ENCODE measurements at regions of chr17 and their contacts with region 1.

Region 1: GRCh38 chr17:42193969-42194899 is at the start of gene GHDC:
- DNase-seq: peak; percentile 77 to 86
- ATAC-seq: peak; percentile 97 to 98
- H3K4me3 ChIP-seq: peak within 1 kb of the TSS; percentile 71 to 95 (median 79)
- H3K27ac ChIP-seq: peak within 1 kb of the TSS; percentile 80 to 95 (median 89)
- H3K4me1 ChIP-seq: peaks cover 16 to 23% of the 10 kb centered on the region in 2 donors
- H3K27me3 ChIP-seq: no peaks in the 10 kb centered on the region
- CTCF ChIP-seq: peak in 1 of 5 experiments; percentile 17
- POLR2A ChIP-seq: no peak
- total RNA-seq, gene GHDC: 13.8 to 20.0 (median 18.2) TPM

Region 2: DNA sequence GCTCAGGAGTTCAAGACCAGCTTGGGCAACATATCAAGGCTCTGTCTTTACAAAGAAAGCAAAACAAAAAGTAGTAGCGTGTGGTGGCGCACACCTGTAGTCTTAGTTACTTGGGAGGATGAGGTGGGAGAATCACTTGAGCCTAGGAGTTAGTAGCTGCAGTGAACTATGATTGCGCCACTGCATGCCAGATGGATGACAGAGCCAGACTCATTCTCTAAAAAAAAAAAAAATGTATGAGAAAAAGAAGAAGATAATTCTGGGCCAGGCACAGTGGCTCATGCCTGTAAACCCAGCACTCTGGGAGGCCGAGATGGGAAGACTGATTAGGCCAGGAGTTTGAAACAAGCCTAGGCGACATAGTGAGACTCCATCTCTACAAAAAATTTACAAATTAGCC is 53.5 kb after region 1 on chr17:
- in situ Hi-C with region 1: no loop called
- intact Hi-C with region 1: no loop called
- DNase-seq: no peak
- ATAC-seq: no peak
- H3K4me3 ChIP-seq: no peak overlapping the region
- H3K27ac ChIP-seq: peak overlapping the region; percentile 86 to 95 (median 92)
- H3K4me1 ChIP-seq: peaks cover 49 to 69% of the 10 kb centered on the region in 2 donors
- H3K27me3 ChIP-seq: no peaks in the 10 kb centered on the region
- CTCF ChIP-seq: no peak
- POLR2A ChIP-seq: no peak

Region 3: GRCh38 chr17:42287926-42288802 is 93.9 kb after region 1 on chr17 and contains the start of gene STAT5A:
- in situ Hi-C with region 1: no loop called
- intact Hi-C with region 1: loop called (anchors 5 kb)
- DNase-seq: peak; percentile 89 to 91
- ATAC-seq: peak; percentile 91 to 95
- H3K4me3 ChIP-seq: peak within 1 kb of the TSS; percentile 51 to 89 (median 68)
- H3K27ac ChIP-seq: peak within 1 kb of the TSS; percentile 81 to 91 (median 86)
- H3K4me1 ChIP-seq: peaks cover 0 to 15% of the 10 kb centered on the region in 2 donors
- H3K27me3 ChIP-seq: no peaks in the 10 kb centered on the region
- CTCF ChIP-seq: no peak
- POLR2A ChIP-seq: peak; percentile 88 to 91
- total RNA-seq, gene STAT5A: 36.0 to 87.0 (median 60.7) TPM

Region 4: DNA sequence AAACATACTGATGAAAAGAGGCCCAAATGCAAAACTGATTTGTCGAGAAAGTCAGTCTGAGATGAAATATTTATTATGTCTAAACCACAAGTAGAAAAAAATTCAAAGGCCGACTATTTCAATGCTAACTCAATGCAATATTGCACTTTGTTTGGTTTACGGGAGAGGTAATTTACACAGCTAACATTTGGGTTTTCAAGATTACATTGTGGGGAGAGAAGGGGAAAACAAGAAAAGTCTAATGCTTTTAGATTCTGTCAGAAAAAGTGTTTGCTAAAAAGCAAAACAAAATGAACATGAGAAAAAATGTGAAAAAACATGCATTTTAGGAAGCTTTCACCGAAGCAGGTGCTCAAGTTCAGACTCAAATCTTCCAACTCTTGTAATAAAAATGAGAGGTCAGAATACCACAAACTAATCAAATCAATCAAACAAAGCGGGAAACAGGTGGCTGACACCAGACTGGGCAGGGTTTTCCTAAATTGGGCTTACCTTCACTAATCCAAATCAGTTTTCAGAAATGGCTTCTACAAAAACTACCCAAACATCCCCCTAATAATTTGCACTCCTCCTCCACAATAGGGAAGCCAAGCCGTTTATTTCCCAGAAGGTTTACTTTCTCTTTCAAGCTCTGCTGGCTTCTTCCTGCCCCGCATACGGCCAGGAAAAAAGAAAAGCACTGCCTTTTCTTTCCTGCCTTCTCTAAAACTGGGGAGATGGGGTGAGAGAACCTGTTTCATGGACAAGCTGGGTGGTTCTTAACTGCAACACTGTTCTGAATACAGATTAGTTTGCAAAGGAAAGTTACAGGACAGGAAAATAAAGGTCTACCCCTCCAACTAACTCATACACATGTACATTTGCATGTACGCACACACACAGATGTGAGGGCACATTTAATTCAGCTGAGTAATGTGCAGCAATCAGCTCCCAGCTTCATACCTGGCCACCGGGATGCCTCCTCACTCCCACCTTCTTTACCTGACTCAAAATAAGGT is 184.7 kb after region 1 on chr17:
- in situ Hi-C with region 1: no loop called
- intact Hi-C with region 1: no loop called
- DNase-seq: no peak
- ATAC-seq: peak in 1 of 2 donors; percentile 60
- H3K4me3 ChIP-seq: peak overlapping the region; percentile 28 to 57 (median 40)
- H3K27ac ChIP-seq: peak overlapping the region; percentile 77 to 99 (median 82)
- H3K4me1 ChIP-seq: peaks cover 59 to 81% of the 10 kb centered on the region in 2 donors
- H3K27me3 ChIP-seq: no peaks in the 10 kb centered on the region
- CTCF ChIP-seq: no peak
- POLR2A ChIP-seq: no peak

Region 5: DNA sequence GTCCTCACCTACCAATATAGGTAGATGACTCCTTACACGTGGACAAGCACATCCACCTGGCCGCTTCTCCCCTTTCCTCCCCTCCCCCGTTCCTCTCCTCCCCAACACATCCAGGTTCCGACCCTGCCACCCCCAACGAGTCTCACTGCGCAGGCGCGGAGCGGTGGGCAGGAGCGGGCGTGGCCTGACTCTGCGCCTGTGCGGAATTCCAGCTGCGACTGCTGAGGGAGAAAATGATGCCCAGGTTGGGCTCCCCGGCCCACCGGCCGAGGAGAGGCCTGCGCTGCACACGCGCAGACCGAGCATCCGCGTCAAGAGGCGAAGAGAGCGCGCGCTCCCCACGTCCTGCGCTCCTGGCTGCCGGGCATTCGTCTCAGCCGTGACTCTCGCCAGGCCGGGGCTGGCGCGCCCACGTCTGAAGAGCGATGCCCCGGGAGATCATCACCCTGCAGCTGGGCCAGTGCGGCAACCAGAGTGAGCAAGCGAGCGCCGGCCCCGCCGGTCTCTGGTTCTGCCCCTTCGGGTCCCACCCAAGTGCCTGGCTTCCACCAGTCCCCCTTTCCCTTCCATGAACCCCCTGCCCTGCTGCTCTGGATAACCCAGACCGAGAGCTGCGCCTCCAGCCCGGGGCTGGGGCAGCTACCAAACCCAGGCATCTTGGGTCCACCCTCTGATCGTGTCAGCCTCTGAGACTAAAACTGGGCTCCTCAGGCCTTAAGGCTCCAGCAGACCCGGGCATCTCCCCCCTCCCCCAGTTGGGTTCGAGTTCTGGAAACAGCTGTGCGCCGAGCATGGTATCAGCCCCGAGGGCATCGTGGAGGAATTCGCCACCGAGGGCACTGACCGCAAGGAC is 465.1 kb after region 1 on chr17 and contains the start of gene TUBG2:
- in situ Hi-C with region 1: no loop called
- intact Hi-C with region 1: no loop called
- DNase-seq: peak; percentile 52 to 79
- ATAC-seq: peak; percentile 63 to 83
- H3K4me3 ChIP-seq: peak within 1 kb of the TSS; percentile 58 to 76 (median 72)
- H3K27ac ChIP-seq: peak within 1 kb of the TSS; percentile 62 to 72 (median 67)
- H3K4me1 ChIP-seq: peaks cover 7 to 12% of the 10 kb centered on the region in 2 donors
- H3K27me3 ChIP-seq: no peaks in the 10 kb centered on the region
- CTCF ChIP-seq: no peak
- POLR2A ChIP-seq: peak; percentile 37 to 38
- total RNA-seq, gene TUBG2: 3.9 to 5.2 (median 4.2) TPM

Measured in gastrocnemius medialis (tissue), 4 donors.